Heart left ventricle (tissue), 16 donors: ENCODE measurements at regions of chr1 and their contacts with region 1.

Region 1: GRCh38 chr1:220776720-220777326 is 9.9 kb upstream of the MTARC1 start:
- DNase-seq: peak; percentile 78 to 88 (median 80)
- ATAC-seq: peak; percentile 87 to 97 (median 94)
- H3K4me3 ChIP-seq: no peak overlapping the region
- H3K27ac ChIP-seq: no peak overlapping the region
- H3K4me1 ChIP-seq: peaks cover 0 to 9% (median 0%) of the 10 kb centered on the region in 12 donors
- H3K27me3 ChIP-seq: no peaks in the 10 kb centered on the region
- CTCF ChIP-seq: peak; percentile 76 to 97 (median 94)
- POLR2A ChIP-seq: no peak

Region 2: DNA sequence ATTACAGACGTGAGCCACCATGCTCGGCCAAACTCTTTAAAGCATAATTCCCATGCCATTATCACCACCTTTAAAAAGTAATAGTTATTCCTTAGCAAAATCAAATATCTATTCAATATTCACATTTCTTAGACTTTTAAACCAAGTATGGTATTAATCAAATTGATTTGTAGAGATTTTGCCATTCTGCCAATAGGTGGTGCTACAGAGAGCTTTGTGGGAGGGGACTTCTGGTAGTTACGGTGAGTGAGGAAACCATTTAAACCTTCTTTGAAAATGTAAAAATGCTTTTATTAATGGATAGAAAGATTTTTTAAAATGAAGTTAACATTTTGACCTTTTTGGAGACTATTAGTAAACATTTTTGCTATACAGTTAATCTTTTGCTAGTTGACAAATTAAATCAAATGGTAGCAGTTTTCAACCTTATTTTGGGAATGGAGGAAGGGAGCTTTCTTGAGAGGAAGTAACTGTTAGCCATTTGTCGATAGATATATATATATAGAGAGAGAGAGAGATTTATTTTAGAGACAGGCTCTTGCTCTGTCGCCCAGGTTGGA is 663.6 kb before region 1 on chr1:
- intact Hi-C with region 1: loop called in 1 of 10 experiments (anchors 10 kb)
- DNase-seq: no peak
- ATAC-seq: no peak
- H3K4me3 ChIP-seq: no peak overlapping the region
- H3K27ac ChIP-seq: no peak overlapping the region
- H3K4me1 ChIP-seq: peaks cover 0 to under 1% (median 0%) of the 10 kb centered on the region in 12 donors
- H3K27me3 ChIP-seq: no peaks in the 10 kb centered on the region
- CTCF ChIP-seq: peak; percentile 38 to 67 (median 56)
- POLR2A ChIP-seq: no peak

Region 3: DNA sequence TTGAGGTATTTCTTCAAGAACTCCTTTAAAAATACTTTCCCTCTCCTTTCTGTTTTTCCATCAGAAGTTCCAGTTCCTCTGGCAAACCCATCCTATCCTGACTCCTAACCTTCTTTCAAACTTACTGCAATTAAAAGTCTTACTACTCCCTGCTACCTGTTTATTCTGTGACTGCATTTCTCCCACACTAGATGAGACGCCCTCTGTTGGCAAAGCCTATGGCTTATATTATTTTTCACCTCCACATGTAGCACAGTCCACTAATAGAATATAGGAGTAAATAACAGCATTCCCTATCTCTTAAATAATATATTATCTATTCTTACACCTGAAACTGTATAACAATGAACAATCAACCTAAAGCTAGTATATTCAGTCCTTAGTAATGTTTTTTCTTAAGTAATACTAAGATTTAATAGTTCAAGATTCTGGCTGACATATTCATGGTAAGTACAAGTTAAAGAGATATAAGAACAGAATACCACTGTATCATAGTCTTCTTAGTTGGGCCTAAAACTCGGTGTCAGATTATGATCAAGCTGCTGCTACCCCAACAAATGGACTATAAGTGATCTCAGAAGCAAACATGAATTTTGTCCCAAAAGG is 559.3 kb before region 1 on chr1:
- intact Hi-C with region 1: loop called in 2 of 10 experiments (anchors 10 kb)
- DNase-seq: no peak
- ATAC-seq: peak in 2 of 4 donors; percentile 37 to 47
- H3K4me3 ChIP-seq: no peak overlapping the region
- H3K27ac ChIP-seq: no peak overlapping the region
- H3K4me1 ChIP-seq: peaks cover 0 to 29% (median 6%) of the 10 kb centered on the region in 12 donors
- H3K27me3 ChIP-seq: no peaks in the 10 kb centered on the region
- CTCF ChIP-seq: peak in 8 of 12 donors; percentile 12 to 44 (median 34)
- POLR2A ChIP-seq: no peak

Region 4: DNA sequence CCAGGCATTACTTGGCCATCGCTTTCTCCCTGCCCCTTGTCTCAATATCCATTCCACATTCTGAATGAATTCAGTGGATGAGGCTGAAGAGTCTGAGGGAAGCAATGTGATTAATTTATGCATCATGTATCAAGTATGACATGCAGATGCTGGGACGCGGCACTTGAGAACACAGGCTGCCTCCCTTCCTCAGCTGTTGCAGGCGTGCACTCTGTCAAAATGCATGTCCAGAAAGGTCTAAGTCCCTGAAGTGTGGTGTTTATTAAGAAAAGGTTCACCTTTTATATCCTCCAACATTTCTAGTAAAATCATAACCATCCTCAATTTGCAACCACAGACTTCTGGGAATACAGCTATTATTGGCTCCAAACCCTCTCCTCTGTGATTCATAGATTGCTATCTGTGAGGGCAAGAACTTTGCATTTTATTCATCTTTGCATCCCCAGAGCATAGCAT is 481.9 kb before region 1 on chr1:
- intact Hi-C with region 1: loop called in 2 of 10 experiments (anchors 2 to 10 kb)
- DNase-seq: no peak
- ATAC-seq: no peak
- H3K4me3 ChIP-seq: no peak overlapping the region
- H3K27ac ChIP-seq: no peak overlapping the region
- H3K4me1 ChIP-seq: peaks cover 0 to 3% (median 0%) of the 10 kb centered on the region in 12 donors
- H3K27me3 ChIP-seq: peaks cover 0 to 10% (median 0%) of the 10 kb centered on the region in 9 donors
- CTCF ChIP-seq: no peak
- POLR2A ChIP-seq: no peak

Region 5: GRCh38 chr1:220454155-220454777 is 322.6 kb before region 1 on chr1:
- intact Hi-C with region 1: no loop called
- DNase-seq: no peak
- ATAC-seq: no peak
- H3K4me3 ChIP-seq: no peak overlapping the region
- H3K27ac ChIP-seq: no peak overlapping the region
- H3K4me1 ChIP-seq: peaks cover 0 to 10% (median 0%) of the 10 kb centered on the region in 12 donors
- H3K27me3 ChIP-seq: no peaks in the 10 kb centered on the region
- CTCF ChIP-seq: peak in 5 of 12 donors; percentile 5 to 51 (median 27)
- POLR2A ChIP-seq: no peak

Region 6: DNA sequence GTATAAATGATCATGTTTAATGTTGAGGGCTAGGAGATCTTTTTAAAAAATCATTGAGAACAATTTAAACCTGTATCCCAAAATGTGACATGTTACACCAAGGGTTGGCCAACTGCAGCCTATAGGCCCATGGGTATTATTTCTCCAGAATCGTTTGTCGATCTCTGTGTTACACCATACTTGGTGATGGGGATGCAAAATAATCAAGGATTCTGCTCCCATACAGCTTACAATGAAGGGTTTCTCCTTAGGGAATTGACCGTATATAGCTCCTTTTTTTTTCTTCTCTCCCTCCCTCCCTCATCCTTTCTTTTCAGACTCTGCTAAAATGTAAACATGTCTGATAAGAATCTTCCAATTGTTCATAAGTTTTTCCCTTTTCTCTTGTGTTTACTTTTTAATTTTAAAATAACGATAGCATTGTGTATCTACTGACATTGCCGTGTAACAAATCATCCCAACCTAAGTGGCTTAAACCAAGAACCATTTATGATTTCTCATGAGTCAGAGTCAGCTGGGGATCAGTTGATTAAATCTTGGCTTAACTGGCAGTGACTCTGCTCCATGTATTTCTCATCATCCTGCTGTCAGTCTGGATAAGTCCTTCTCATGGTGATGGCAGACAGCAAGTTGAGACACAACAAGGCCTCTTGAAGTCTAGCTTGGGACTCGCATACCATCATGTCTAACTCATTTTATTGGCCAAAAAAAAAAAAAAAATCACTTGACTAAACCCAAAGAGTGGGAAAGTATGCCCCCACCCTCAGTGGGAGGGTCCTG is 200.9 kb before region 1 on chr1:
- intact Hi-C with region 1: no loop called
- DNase-seq: no peak
- ATAC-seq: no peak
- H3K4me3 ChIP-seq: no peak overlapping the region
- H3K27ac ChIP-seq: no peak overlapping the region
- H3K4me1 ChIP-seq: no peaks in the 10 kb centered on the region
- H3K27me3 ChIP-seq: no peaks in the 10 kb centered on the region
- CTCF ChIP-seq: no peak
- POLR2A ChIP-seq: no peak

Region 7: GRCh38 chr1:220690140-220691025 is 86.4 kb before region 1 on chr1 and contains the start of gene C1orf115:
- intact Hi-C with region 1: loop called in 3 of 10 experiments (anchors 1 to 5 kb)
- DNase-seq: peak; percentile 73 to 89 (median 77)
- ATAC-seq: peak; percentile 78 to 98 (median 94)
- H3K4me3 ChIP-seq: peak within 1 kb of the TSS; percentile 64 to 89 (median 82)
- H3K27ac ChIP-seq: peak within 1 kb of the TSS; percentile 11 to 89 (median 70)
- H3K4me1 ChIP-seq: peaks cover 0 to 17% (median 4%) of the 10 kb centered on the region in 12 donors
- H3K27me3 ChIP-seq: no peaks in the 10 kb centered on the region
- CTCF ChIP-seq: peak; percentile 96 to 99 (median 98)
- POLR2A ChIP-seq: peak in 1 of 2 donors; percentile 69
- total RNA-seq, gene C1orf115: 8.5 to 39.0 (median 15.4) TPM

Region 8: DNA sequence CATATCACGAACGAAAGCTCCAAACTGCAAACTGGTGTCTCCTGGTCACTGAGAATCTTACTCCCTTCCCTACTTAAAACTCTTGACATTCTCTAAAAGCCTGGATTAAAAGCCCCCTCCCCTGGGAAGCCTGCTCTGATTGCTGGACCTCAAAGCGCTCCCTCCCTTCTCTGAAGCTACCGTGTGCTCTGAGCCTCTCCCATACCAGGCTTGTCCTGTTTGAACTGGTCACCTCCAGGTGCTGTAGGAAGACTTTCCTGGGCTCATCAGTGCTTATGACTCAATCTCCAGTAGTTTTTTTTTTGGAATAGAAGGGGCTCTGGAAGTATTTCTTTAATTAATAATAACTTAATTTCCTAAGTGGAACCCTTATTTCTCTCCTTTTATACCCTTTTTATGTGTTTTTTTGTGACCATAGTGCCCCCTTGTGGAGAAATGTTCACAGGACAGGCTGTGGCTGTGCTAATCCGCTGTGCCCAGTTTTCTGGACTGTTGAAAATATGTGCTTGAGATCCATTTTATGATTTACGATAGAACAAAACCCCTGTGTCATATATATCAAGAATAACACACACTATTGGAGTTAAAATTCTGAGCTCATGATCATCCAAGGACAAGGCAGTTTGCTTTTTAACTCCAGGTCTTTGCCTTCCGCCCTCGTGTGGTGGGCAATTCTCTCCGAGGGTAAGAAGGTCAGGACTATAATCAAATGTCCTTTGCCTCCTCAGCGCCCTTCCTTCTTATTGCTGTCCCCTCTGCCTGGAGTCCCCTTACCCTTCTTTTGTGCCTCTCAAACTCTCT is 26.8 kb after region 1 on chr1:
- intact Hi-C with region 1: loop called in 1 of 10 experiments (anchors 1 kb)
- DNase-seq: no peak
- ATAC-seq: peak in 3 of 4 donors; percentile 40 to 51 (median 51)
- H3K4me3 ChIP-seq: no peak overlapping the region
- H3K27ac ChIP-seq: peak overlapping the region in 1 of 12 donors; percentile 72
- H3K4me1 ChIP-seq: peaks cover 0 to 5% (median 0%) of the 10 kb centered on the region in 12 donors
- H3K27me3 ChIP-seq: no peaks in the 10 kb centered on the region
- CTCF ChIP-seq: peak; percentile 75 to 86 (median 81)
- POLR2A ChIP-seq: no peak

Region 9: GRCh38 chr1:220818421-220819173 is 41.8 kb after region 1 on chr1:
- intact Hi-C with region 1: no loop called
- DNase-seq: no peak
- ATAC-seq: no peak
- H3K4me3 ChIP-seq: no peak overlapping the region
- H3K27ac ChIP-seq: peak overlapping the region in 1 of 12 donors; percentile 76
- H3K4me1 ChIP-seq: no peaks in the 10 kb centered on the region
- H3K27me3 ChIP-seq: no peaks in the 10 kb centered on the region
- CTCF ChIP-seq: no peak
- POLR2A ChIP-seq: no peak